ENCODE measurements at regions of chr18 and their contacts with region 1.

Region 1: GRCh38 chr18:48790226-48790874 is 160.4 kb downstream of the SMAD7 start:
- DNase-seq: no peak
- ATAC-seq: no peak
- H3K4me3 ChIP-seq: no peak overlapping the region
- H3K27ac ChIP-seq: no peak overlapping the region
- H3K4me1 ChIP-seq: no peaks in the 10 kb centered on the region
- CTCF ChIP-seq: no peak
- EP300 ChIP-seq: no peak
- POLR2A ChIP-seq: no peak
- RAD21 ChIP-seq: no peak

Region 2: GRCh38 chr18:48777026-48777743 is 13.2 kb before region 1 on chr18:
- CTCF ChIA-PET with region 1: interaction called, 13 read pairs
- POLR2A ChIA-PET with region 1: no interaction called
- DNase-seq: peak; percentile 42 to 72
- ATAC-seq: peak; percentile 75 to 94; a peak in 5 of 6 replicates
- H3K4me3 ChIP-seq: no peak overlapping the region
- H3K27ac ChIP-seq: peak overlapping the region in 1 of 2 experiments; percentile 60; a peak in 3 of 6 replicates
- H3K4me1 ChIP-seq: peaks cover 10% of the 10 kb centered on the region; the same call in 1 of the 3 replicates
- CTCF ChIP-seq: peak; percentile 68
- EP300 ChIP-seq: no peak
- POLR2A ChIP-seq: no peak
- RAD21 ChIP-seq: peak; percentile 80 to 84

Measured in A549 (cell line).